H1 (cell line): ENCODE measurements at regions of chr20 and their contacts with region 1.

Region 1: DNA sequence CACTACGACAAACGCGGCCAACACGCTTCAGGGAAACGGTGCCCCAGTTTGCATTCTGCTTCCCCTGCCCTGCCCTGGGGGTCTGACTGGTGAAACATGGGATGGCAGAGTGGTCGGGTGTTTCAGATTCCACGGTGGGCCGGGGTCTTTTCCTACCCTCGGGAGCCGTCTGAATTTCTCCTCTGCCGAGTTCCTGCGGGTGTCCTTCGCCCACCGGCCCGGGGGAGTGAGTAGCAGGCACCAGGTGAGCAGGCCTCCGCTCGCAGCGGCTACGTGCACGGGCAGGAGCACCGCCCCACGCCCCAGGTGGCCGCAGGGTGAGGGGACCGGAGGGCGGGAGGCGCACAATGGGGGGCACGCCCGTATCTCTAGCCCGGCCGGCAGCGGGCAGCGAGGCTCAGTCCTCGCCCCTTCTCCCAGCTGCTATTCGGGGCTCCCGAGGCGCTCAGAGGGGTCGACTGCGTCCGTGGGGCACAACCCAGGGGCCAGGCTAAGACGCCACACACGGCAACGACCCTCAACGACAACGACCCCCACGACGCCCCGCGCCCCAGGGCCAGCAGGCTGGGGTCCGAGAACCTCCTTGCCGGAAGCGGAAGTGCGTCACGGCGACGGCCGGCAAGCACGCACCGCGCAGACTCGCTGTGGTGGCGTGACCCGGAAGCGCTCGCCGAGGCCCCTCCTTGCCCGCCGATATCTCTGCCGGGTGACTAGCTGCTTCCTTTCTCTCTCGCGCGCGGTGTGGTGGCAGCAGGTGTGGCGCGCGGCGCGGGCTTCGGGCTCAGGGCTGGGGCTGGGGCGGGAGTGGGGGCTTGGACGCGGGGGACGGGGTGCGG is at the start of gene RPS21:
- DNase-seq: peak in 1 of 2 experiments; percentile 90
- H3K4me3 ChIP-seq: peak within 1 kb of the TSS; percentile 93 to 100 (median 99)
- H3K27ac ChIP-seq: peak within 1 kb of the TSS; percentile 88
- H3K4me1 ChIP-seq: peaks cover 0 to 11% (median 2%) of the 10 kb centered on the region in 4 experiments; a peak in 5 of 7 replicates
- H3K27me3 ChIP-seq: no peaks in the 10 kb centered on the region
- CTCF ChIP-seq: no peak
- EP300 ChIP-seq: no peak
- POLR2A ChIP-seq: peak; percentile 91 to 96
- RAD21 ChIP-seq: no peak
- total RNA-seq, gene RPS21: 1,787 and 1,829 TPM in 2 replicates

Region 2: DNA sequence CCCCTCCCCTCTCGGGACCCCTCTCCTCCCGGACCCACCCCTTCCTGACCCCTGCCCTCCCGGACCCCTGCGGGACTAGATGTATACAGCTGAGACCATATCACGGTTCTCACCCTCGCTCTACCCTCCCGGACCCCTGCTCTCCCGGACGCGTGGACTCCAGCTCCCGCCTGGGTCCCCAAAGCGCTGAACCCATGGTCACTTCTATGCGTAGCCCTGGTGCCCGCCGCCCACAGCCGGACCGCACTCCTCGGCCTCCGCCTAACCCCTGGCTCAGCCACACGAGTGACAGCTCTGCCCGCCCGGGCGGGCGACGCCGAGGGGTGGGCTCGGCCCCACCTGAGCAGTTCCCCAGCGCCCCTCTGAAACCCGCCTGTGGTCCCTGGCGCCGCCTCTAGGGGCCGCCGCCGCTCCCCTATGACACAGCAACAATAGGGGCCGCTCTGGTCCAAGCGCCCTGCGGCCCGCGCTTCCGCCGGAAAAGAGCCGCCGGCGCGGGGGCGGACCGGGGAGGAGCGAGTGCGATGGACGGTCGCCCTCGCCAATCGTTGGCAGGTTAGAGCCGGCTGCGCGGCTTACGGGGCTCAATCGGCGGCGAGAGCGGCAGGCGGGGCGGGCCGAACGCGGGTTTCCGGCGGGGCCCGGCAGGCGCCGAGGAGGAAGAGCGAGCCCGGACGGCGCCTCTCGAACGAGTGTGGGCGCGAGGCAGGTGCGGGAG is 84.1 kb before region 1 on chr20 and contains the start of gene ADRM1:
- CTCF ChIA-PET with region 1: interaction called, 15 read pairs
- POLR2A ChIA-PET with region 1: interaction called, 96 read pairs
- DNase-seq: peak; percentile 89 to 98
- H3K4me3 ChIP-seq: peak within 1 kb of the TSS; percentile 62 to 96 (median 90)
- H3K27ac ChIP-seq: peak within 1 kb of the TSS; percentile 73; the same call in 1 of the 2 replicates
- H3K4me1 ChIP-seq: peaks cover 0 to 9% (median 4%) of the 10 kb centered on the region in 4 experiments; a peak in 5 of 7 replicates
- H3K27me3 ChIP-seq: no peaks in the 10 kb centered on the region
- CTCF ChIP-seq: peak; percentile 64 to 98 (median 75)
- EP300 ChIP-seq: peak; percentile 44 to 90; a peak in 2 of 3 replicates
- POLR2A ChIP-seq: peak in 1 of 2 experiments; percentile 76; a peak in 2 of 3 replicates
- RAD21 ChIP-seq: peak; percentile 47 to 56
- total RNA-seq, gene ADRM1: 126 and 138 TPM in 2 replicates

Region 3: GRCh38 chr20:62344782-62345181 is 41.8 kb before region 1 on chr20:
- CTCF ChIA-PET with region 1: interaction called, 17 read pairs
- POLR2A ChIA-PET with region 1: interaction called, 7 read pairs
- DNase-seq: no peak
- H3K4me3 ChIP-seq: no peak overlapping the region
- H3K27ac ChIP-seq: no peak overlapping the region
- H3K4me1 ChIP-seq: no peaks in the 10 kb centered on the region
- H3K27me3 ChIP-seq: no peaks in the 10 kb centered on the region
- CTCF ChIP-seq: no peak
- EP300 ChIP-seq: no peak
- POLR2A ChIP-seq: no peak
- RAD21 ChIP-seq: no peak

Region 4: GRCh38 chr20:62368976-62369814 is 17.4 kb before region 1 on chr20:
- CTCF ChIA-PET with region 1: interaction called, 212 read pairs
- POLR2A ChIA-PET with region 1: interaction called, 213 read pairs
- DNase-seq: peak in 1 of 2 experiments; percentile 74
- H3K4me3 ChIP-seq: peak overlapping the region; percentile 3 to 77 (median 43); a peak in 5 of 8 replicates
- H3K27ac ChIP-seq: no peak overlapping the region
- H3K4me1 ChIP-seq: peaks cover 10 to 51% (median 43%) of the 10 kb centered on the region in 4 experiments
- H3K27me3 ChIP-seq: no peaks in the 10 kb centered on the region
- CTCF ChIP-seq: peak; percentile 48 to 52 (median 48)
- EP300 ChIP-seq: no peak
- POLR2A ChIP-seq: peak in 1 of 2 experiments; percentile 30; a peak in 1 of 3 replicates
- RAD21 ChIP-seq: peak in 1 of 2 experiments; percentile 18; a peak in 1 of 4 replicates

Region 5: DNA sequence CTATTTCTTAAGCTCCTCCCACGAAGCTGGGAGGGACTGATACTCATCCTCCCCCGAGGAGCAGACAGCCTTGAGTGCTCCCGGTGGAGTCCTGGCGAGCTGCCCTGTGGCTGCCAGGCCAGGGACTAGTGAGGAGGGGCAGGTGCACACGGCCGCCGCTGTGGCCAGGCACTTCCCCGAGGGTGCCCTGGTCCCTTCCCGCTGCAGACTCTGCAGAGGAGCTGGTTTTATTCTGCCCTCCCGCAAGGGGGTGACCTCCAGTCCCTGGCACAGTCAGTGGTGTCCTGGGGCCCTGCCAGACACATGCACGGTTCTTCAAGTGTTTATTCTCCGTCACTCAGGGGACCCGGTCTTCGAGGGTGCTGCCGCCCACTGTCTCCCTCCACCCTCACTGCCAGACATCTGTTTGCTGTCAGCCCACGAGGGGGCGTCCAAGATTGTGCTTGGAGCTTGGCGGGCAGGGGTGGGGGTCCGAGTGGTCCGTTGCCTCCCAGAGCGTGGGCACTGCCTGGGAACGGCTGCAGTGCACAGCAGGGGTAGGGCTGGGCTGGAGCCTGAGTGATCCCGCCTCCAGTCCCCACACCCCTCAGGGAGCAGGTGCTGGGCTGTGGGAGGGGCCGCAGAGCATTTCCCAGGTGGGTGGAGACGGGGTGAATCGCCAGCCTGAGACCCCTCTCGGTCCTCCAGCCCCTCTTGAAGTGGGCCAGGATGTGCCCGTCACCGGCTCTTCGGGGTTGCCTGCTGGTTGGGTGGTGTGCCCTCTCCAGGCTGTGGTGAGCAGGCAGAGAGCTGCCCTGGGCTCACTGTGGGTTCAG is 23.5 kb after region 1 on chr20:
- CTCF ChIA-PET with region 1: interaction called, 103 read pairs
- POLR2A ChIA-PET with region 1: interaction called, 105 read pairs
- DNase-seq: peak in 1 of 2 experiments; percentile 85
- H3K4me3 ChIP-seq: peak overlapping the region in 1 of 4 experiments; percentile 34; a peak in 1 of 8 replicates
- H3K27ac ChIP-seq: no peak overlapping the region
- H3K4me1 ChIP-seq: peaks cover 0 to 26% (median 8%) of the 10 kb centered on the region in 4 experiments; a peak in 6 of 7 replicates
- H3K27me3 ChIP-seq: peaks cover 0 to 8% (median 1%) of the 10 kb centered on the region in 4 experiments; a peak in 2 of 7 replicates
- CTCF ChIP-seq: peak in 2 of 3 experiments; percentile 75 to 86; a peak in 3 of 4 replicates
- EP300 ChIP-seq: no peak
- POLR2A ChIP-seq: no peak
- RAD21 ChIP-seq: peak; percentile 79 to 87

Region 6: DNA sequence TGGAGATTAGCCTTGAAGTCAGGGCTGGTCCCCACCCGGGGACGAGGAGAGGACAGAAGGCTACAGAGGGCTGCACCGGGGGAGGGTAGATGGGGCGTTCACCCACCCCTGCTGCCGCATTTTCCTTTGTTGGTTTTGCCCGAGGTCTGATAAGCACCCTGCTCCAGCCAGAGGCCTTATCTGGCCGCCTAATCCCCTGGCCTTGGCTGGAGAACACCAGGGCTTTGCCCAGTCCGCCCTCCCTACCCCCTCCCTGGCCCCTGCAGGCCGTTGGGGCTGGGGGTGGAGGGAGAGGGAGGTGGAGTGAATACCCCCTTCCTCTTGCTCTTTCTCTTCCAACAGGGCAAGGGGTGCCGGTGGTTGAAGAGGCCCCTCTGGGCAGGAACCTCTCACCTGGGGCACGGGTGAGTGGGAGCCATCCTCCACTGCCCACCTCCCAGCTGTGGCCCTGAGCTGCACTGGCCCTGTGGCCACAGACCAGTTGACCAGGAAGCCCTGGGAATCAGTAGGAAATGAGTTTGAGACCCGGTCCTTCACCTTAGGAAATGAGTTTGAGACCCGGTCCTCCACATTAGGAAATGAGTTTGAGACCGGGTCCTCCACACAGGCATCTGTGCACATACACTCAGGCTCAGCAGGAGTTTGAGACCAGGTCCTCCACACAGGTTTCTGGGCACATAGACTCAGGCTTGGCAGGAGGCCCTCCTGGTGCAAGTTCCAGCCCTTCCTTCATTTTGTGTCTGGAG is 101.1 kb after region 1 on chr20:
- CTCF ChIA-PET with region 1: no interaction called
- POLR2A ChIA-PET with region 1: no interaction called
- DNase-seq: no peak
- H3K4me3 ChIP-seq: no peak overlapping the region
- H3K27ac ChIP-seq: no peak overlapping the region
- H3K4me1 ChIP-seq: peaks cover 0 to 24% (median 17%) of the 10 kb centered on the region in 4 experiments; a peak in 6 of 7 replicates
- H3K27me3 ChIP-seq: peaks cover 2 to 29% (median 25%) of the 10 kb centered on the region in 4 experiments
- CTCF ChIP-seq: no peak
- EP300 ChIP-seq: no peak
- POLR2A ChIP-seq: no peak
- RAD21 ChIP-seq: no peak